ENCODE measurements at regions of chr15 and their contacts with region 1.

Region 1: DNA sequence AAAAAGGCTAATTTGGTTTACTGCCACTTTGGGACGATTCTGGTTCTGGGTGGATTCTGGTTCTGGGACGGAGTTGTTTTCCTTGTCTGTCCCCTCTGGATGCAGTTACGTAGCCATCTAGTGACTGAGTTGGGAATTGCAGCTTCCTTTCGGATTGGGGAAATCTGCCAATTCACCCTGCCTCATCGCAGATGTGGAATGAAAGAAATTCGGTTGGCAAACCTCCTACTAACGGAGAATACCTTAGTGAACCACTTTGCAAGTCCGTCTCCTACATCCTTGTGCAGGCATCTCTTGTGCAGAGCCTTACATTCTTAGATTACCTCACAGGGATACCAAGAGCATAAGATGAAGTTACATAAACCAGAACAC is 31.5 kb upstream of the AP4E1 start:
- DNase-seq: peak in 2 of 3 donors; percentile 26 to 75
- ATAC-seq: peak; percentile 84 to 87 (median 87)
- H3K4me3 ChIP-seq: peak overlapping the region; percentile 21 to 47 (median 45)
- H3K27ac ChIP-seq: peak overlapping the region in 2 of 3 donors; percentile 19 to 47
- H3K4me1 ChIP-seq: peaks cover 0 to 24% (median 8%) of the 10 kb centered on the region in 4 donors
- H3K27me3 ChIP-seq: no peaks in the 10 kb centered on the region
- CTCF ChIP-seq: peak; percentile 93 to 98 (median 94)
- POLR2A ChIP-seq: no peak

Region 2: GRCh38 chr15:50675536-50676144 is 201.3 kb before region 1 on chr15:
- intact Hi-C with region 1: loop called in 1 of 2 experiments (anchors 10 kb)
- DNase-seq: no peak
- ATAC-seq: peak in 3 of 4 donors; percentile 19 to 30 (median 27)
- H3K4me3 ChIP-seq: no peak overlapping the region
- H3K27ac ChIP-seq: no peak overlapping the region
- H3K4me1 ChIP-seq: peaks cover 0 to 51% (median 7%) of the 10 kb centered on the region in 4 donors
- H3K27me3 ChIP-seq: no peaks in the 10 kb centered on the region
- CTCF ChIP-seq: peak; percentile 67 to 80 (median 73)
- POLR2A ChIP-seq: no peak

Region 3: DNA sequence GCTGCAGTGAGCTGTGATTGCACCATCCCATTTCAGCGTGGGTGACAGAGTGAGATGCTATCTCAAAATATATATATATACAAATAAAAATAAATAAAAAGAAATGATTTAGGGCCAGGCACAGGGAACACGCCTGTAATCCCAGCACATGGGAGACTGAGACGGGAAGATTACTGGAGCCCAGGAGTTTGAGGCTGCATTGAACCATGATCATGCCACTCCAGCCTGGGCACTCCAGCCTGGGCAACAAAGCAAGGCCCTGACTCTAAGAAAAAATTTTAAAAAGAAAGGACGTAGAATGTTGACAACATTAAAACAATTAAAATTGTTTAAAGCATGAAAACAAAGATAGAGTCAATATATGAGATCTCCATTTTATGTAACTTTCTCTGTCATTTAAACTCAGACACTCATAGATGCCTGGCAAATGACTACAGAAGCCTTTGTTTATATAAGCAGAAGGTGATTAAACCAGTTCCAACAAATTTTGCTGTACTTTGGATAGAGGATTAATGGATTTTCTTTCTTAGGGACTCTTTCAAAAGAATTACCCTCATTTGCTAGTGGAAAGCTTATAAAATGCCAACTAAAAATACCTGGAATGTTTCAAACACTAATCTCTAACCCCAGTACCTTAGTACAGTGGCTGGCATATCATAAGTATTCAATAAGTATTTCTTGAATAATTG is 179.7 kb before region 1 on chr15:
- intact Hi-C with region 1: loop called in 1 of 2 experiments (anchors 10 kb)
- DNase-seq: no peak
- ATAC-seq: peak; percentile 83 to 89 (median 86)
- H3K4me3 ChIP-seq: no peak overlapping the region
- H3K27ac ChIP-seq: peak overlapping the region; percentile 39 to 73 (median 42)
- H3K4me1 ChIP-seq: peaks cover 0 to 22% (median 9%) of the 10 kb centered on the region in 4 donors
- H3K27me3 ChIP-seq: no peaks in the 10 kb centered on the region
- CTCF ChIP-seq: no peak
- POLR2A ChIP-seq: no peak